ENCODE measurements at regions of chr14 and their contacts with region 1.

Region 1: GRCh38 chr14:94936401-94936892 is 166.5 kb upstream of the GSC start:
- DNase-seq: peak; percentile 49
- H3K4me3 ChIP-seq: peak overlapping the region in 1 of 4 donors; percentile 17
- H3K27ac ChIP-seq: peak overlapping the region; percentile 76 to 86 (median 82)
- H3K4me1 ChIP-seq: peaks cover 7 to 21% (median 12%) of the 10 kb centered on the region in 4 donors
- H3K27me3 ChIP-seq: no peaks in the 10 kb centered on the region
- CTCF ChIP-seq: no peak
- EP300 ChIP-seq: no peak
- POLR2A ChIP-seq: no peak

Region 2: DNA sequence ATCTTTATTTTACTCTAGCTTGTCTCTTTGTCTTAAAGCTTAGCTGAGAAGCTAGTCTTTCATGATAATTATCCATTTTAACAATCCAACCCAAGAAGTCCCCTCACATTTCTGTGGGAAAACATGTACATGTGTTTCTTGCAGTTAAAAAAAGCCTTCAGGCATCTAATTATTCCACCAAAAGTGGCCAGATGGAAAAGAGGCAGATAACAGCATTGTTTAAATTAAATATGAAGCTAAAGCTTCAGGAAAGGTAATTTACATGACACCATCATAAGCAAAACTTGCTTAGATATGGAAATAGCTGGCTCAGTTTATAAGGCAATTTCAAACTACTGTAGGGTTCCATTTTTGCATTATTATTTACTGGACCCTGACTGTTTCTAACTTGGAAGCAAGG is 1330.4 kb before region 1 on chr14:
- in situ Hi-C with region 1: no loop called
- intact Hi-C with region 1: no loop called
- DNase-seq: no peak
- H3K4me3 ChIP-seq: no peak overlapping the region
- H3K27ac ChIP-seq: no peak overlapping the region
- H3K4me1 ChIP-seq: no peaks in the 10 kb centered on the region
- H3K27me3 ChIP-seq: peaks cover 7% of the 10 kb centered on the region
- CTCF ChIP-seq: no peak
- EP300 ChIP-seq: no peak
- POLR2A ChIP-seq: no peak

Region 3: DNA sequence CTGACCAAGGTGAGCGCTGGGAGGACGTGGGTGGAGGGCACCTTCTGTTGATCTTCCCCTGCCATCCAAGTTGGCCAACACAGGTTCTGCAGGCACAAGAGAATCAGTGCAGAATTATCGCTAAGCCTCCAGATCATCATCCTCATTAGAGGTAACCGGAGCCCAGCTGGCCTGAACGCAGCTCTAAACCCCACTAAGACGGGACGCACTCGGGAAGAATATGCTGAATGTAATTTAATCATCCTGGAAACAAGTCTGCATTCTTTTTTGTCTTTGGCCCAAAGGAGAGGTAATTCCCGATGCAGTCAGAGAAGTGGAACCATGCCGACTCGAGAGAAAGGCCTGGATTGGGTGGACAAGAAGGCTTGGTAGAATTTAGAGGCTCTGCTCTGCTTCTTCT is 55.6 kb before region 1 on chr14:
- in situ Hi-C with region 1: no loop called
- intact Hi-C with region 1: no loop called
- DNase-seq: no peak
- H3K4me3 ChIP-seq: no peak overlapping the region
- H3K27ac ChIP-seq: no peak overlapping the region
- H3K4me1 ChIP-seq: no peaks in the 10 kb centered on the region
- H3K27me3 ChIP-seq: no peaks in the 10 kb centered on the region
- CTCF ChIP-seq: no peak
- EP300 ChIP-seq: no peak
- POLR2A ChIP-seq: no peak

Region 4: DNA sequence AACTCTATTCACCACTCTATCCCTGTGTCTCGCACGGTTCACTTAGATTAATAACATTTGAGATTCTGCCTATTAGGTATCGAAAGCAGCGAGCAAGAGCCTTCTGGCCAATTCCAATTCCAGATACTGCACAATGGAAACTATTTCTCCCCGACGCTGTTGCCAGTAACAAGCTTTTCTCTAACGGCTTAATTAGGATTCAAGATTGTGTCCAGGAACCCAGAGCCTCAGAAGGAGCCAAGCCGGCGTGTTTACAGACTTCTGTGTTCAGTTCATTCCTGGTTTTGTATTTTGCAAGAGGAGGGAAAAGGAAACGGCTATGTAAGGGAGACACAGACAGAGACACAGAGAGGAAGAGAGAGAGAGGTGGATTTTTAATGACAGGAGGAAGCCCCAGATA is 35.3 kb after region 1 on chr14:
- in situ Hi-C with region 1: no loop called
- intact Hi-C with region 1: loop called (anchors 1 kb)
- DNase-seq: peak; percentile 38
- H3K4me3 ChIP-seq: no peak overlapping the region
- H3K27ac ChIP-seq: peak overlapping the region; percentile 66 to 77 (median 74)
- H3K4me1 ChIP-seq: no peaks in the 10 kb centered on the region
- H3K27me3 ChIP-seq: no peaks in the 10 kb centered on the region
- CTCF ChIP-seq: no peak
- EP300 ChIP-seq: peak; percentile 94
- POLR2A ChIP-seq: no peak

Region 5: DNA sequence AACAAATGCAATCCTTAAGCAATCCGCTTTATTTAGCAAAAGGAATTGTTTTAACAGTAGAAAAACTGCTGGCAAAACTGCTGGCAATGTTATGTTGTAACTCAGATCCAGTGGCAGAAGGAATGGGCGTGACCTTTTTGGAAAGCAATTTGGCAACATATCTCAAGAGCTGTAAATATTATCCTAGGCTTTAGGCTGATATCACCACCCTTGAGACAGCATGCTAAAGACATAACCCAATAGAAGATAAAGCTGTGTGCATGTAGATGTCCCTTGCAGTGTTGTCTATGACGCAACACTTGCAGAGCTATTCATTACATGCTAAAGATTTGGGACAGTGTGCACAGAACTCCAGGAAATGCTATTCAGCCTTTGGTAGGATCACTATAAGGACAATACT is 82.4 kb after region 1 on chr14:
- in situ Hi-C with region 1: no loop called
- intact Hi-C with region 1: loop called (anchors 10 kb)
- DNase-seq: no peak
- H3K4me3 ChIP-seq: no peak overlapping the region
- H3K27ac ChIP-seq: no peak overlapping the region
- H3K4me1 ChIP-seq: no peaks in the 10 kb centered on the region
- H3K27me3 ChIP-seq: no peaks in the 10 kb centered on the region
- CTCF ChIP-seq: no peak
- EP300 ChIP-seq: no peak
- POLR2A ChIP-seq: no peak

Region 6: DNA sequence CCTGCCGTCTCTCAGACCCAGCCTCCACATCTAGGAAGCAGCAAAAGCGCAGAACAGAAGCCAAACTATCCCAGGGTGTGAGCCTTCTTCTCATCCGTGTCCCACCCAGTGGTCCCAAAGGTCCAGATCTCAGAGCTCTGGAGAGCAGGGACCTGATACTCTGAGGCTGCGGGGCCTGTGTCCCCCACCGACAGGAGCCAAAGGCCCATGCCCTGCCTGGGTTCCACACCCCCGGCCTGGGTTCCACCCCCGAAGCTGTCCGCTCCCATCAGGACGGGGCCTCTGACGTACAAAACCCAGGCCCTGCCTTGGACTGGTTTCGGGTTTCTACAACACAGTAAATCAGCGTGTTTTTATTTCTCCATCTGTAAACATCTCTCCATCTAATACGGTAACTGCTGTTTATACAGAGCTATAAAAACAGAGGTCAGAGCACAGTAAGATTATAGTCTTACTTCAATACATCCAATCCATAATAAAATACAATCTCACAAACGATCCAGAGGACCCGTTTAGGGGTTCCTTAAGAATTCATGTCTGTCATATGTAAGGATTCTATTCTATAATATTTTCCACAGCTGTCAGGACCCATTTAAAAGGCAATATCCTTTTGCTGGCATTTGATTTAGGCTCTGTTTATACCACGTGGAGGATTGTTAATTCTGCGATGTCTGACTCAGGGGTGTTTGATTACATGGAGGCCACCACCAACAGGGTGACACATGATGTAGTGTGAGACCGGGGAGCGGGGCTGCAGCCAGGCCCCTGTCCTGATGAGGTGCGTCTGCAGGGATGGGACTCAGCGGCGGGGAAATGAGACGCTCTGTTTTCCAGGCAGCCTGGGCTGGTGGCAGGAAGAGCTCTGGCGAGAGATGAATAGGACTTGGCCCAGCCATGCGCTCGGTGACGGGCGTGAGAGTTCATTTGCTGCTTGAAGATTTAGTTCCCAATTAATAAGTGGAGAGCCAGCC is 110.5 kb after region 1 on chr14:
- in situ Hi-C with region 1: no loop called
- intact Hi-C with region 1: loop called (anchors 2 kb)
- DNase-seq: peak; percentile 54
- H3K4me3 ChIP-seq: no peak overlapping the region
- H3K27ac ChIP-seq: peak overlapping the region; percentile 59 to 79 (median 78)
- H3K4me1 ChIP-seq: peaks cover 3 to 13% (median 4%) of the 10 kb centered on the region in 4 donors
- H3K27me3 ChIP-seq: no peaks in the 10 kb centered on the region
- CTCF ChIP-seq: no peak
- EP300 ChIP-seq: peak; percentile 88
- POLR2A ChIP-seq: no peak

Region 7: GRCh38 chr14:95319312-95320021 is 383.0 kb after region 1 on chr14 and contains the start of gene CLMN:
- in situ Hi-C with region 1: no loop called
- intact Hi-C with region 1: no loop called
- DNase-seq: peak; percentile 61
- H3K4me3 ChIP-seq: peak within 1 kb of the TSS; percentile 59 to 97 (median 90)
- H3K27ac ChIP-seq: peak within 1 kb of the TSS; percentile 87 to 93 (median 92)
- H3K4me1 ChIP-seq: peaks cover 12 to 38% (median 21%) of the 10 kb centered on the region in 4 donors
- H3K27me3 ChIP-seq: no peaks in the 10 kb centered on the region
- CTCF ChIP-seq: no peak
- EP300 ChIP-seq: no peak
- POLR2A ChIP-seq: peak; percentile 23
- total RNA-seq, gene CLMN: 71.1 to 118 (median 90.1) TPM

Measured in transverse colon (tissue), 4 donors.